Right ventricle myocardium inferior (tissue), 1 donor: ENCODE measurements at regions of chr2 and their contacts with region 1.

Region 1: GRCh38 chr2:48107326-48107925 is 201.1 kb upstream of the FBXO11 start:
- DNase-seq: no peak
- ATAC-seq: no peak

Region 2: GRCh38 chr2:47437287-47437686 is 670.1 kb before region 1 on chr2:
- intact Hi-C with region 1: loop called (anchors 5 kb)
- DNase-seq: no peak
- ATAC-seq: no peak

Region 3: DNA sequence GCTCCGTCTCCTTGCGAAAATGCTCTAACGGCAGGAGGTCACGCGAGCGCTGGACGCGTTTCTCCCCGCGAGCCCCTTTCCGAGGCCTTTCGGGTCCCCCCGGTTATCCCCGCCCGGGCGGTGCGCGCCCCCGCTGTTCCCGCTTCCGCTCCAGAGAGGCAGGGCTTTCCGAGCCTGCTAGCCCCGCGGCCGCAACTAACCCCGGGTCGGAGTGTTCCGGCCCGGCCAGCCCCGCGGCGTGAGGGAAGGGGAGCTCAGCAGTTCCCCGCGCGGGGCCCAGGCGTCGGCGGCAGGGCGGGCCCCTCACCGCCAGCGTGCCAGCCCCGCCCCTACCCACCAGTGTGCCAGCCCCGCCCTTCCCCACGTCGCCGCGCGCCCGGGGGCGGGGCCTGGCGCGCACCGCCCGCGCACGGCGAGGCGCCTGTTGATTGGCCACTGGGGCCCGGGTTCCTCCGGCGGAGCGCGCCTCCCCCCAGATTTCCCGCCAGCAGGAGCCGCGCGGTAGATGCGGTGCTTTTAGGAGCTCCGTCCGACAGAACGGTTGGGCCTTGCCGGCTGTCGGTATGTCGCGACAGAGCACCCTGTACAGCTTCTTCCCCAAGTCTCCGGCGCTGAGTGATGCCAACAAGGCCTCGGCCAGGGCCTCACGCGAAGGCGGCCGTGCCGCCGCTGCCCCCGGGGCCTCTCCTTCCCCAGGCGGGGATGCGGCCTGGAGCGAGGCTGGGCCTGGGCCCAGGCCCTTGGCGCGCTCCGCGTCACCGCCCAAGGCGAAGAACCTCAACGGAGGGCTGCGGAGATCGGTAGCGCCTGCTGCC is 324.5 kb before region 1 on chr2 and contains the start of gene MSH6:
- intact Hi-C with region 1: loop called (anchors 5 kb)
- DNase-seq: peak; percentile 94
- ATAC-seq: peak; percentile 98
- total RNA-seq, gene MSH6: 25.4 TPM

Region 4: GRCh38 chr2:47906157-47907038 is 201.0 kb before region 1 on chr2 and contains the start of gene FBXO11:
- intact Hi-C with region 1: loop called (anchors 1 kb)
- DNase-seq: peak; percentile 97
- ATAC-seq: peak; percentile 97
- total RNA-seq, gene FBXO11: 35.6 TPM

Region 5: DNA sequence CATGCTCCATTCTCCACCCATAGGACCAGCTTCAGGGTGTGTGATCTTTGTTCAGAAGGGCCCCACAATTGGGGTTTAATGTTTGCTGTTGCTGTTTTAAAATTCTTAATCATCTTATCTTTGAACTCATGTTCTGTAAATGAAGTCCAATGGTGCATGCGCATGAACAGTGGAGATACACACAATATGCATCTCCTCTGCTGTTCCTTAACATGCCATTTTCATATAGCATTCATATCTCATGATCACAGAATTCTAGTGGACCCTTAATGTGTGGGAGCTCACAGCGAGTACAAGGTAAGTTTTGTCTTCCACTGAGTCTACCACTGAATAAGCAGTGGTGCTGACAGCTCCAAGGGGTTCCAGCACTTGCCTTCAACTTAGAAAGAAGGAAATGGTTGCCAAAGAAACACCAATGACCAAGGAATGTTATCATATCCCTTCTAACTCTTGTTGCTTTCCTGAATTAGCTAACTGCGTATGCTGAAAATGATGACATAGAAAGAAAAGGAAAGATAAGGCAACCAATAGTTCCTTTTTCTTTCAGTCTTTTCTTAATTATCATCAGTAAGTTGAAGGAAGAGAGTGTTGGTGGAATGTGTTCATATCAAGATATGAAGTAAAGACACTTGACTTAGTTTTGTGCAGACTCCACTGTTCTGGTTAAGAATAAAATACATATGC is 57.8 kb after region 1 on chr2:
- intact Hi-C with region 1: no loop called
- DNase-seq: no peak
- ATAC-seq: no peak

Region 6: DNA sequence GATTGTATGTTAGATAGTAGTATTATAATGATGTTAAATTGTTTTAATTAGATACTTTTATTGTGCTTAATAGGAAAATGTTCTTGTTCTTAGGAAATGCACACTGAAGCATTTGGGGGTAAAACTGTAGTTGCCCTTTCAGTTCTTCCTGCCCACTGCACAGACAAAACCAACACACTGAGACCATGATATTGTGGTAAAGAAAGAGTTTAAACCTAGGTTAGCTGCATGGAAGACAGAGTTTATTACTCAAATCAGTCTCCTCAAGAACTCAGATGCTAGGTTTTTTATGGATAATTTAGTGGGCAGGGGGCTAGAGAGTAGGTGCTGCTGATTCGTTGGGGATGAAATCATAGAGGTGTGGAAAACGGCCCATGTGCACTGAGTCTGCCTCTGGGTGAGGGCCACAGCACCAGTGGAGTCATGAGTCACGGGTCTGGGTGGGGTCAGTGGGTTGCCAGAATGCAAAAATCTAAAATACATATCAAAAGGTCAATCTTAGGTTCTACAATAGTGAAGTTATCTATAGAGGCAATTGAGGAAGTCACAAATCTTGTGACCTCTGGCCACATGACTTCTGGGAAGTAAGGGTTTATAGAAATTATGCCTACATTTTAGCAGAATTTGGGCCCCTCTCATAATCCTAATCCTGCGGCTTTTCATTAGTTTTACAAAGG is 82.3 kb after region 1 on chr2:
- intact Hi-C with region 1: no loop called
- DNase-seq: no peak
- ATAC-seq: no peak

Region 7: GRCh38 chr2:48471048-48471474 is 363.6 kb after region 1 on chr2:
- intact Hi-C with region 1: loop called (anchors 2 kb)
- DNase-seq: no peak
- ATAC-seq: peak; percentile 52